Activated T-helper 1 cell treated with anti-CD3 and anti-CD28 coated beads, Interleukin-12 subunit alpha, Interleukin-12 subunit beta, Interleukin-2, Interleukin-4 antibody, amounts not matched to agents 30 ng/mL and 10 ng/mL and 1 ng/mL, durations not matched to agents 14 hours and 24 hours and 36 hours (primary cell): ENCODE measurements at regions of chr2 and their contacts with region 1.

Region 1: DNA sequence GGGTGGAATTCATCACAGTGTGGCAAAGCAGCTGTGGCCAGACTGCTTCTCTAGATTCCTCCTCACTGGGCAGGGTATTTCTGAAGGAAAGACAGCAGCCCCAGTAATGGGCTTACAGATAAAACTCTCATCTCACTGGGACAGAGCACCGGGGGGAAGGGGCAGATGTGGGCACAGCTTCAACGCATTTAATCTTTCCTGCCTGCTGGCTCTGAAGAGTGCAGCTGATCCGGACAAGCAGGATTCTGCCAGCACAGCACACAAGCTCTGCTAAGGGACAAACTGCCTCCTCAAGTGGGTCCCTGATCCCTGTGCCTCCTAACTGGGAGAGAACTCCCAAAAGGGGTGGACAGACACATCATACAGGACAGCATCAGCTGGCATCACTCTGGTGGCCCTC is 779.9 kb upstream of the CNTNAP5 start:
- DNase-seq: no peak
- H3K4me3 Mint-ChIP-seq: no peak overlapping the region
- H3K27ac Mint-ChIP-seq: no peak overlapping the region
- H3K4me1 Mint-ChIP-seq: no peaks in the 10 kb centered on the region
- H3K27me3 Mint-ChIP-seq: no peaks in the 10 kb centered on the region

Region 2: GRCh38 chr2:123283431-123283830 is 38.3 kb after region 1 on chr2:
- intact Hi-C with region 1: no loop called
- DNase-seq: no peak
- H3K4me3 Mint-ChIP-seq: no peak overlapping the region
- H3K27ac Mint-ChIP-seq: no peak overlapping the region
- H3K4me1 Mint-ChIP-seq: no peaks in the 10 kb centered on the region
- H3K27me3 Mint-ChIP-seq: no peaks in the 10 kb centered on the region

Region 3: GRCh38 chr2:123785332-123785731 is 540.2 kb after region 1 on chr2:
- intact Hi-C with region 1: loop called (anchors 5 kb)
- DNase-seq: no peak
- H3K4me3 Mint-ChIP-seq: no peak overlapping the region
- H3K27ac Mint-ChIP-seq: no peak overlapping the region
- H3K4me1 Mint-ChIP-seq: no peaks in the 10 kb centered on the region
- H3K27me3 Mint-ChIP-seq: no peaks in the 10 kb centered on the region